ENCODE measurements at regions of chr3 and their contacts with region 1.

Region 1: GRCh38 chr3:111989061-111989678 is 9.6 kb upstream of the TAGLN3 start:
- DNase-seq: no peak
- ATAC-seq: peak; percentile 74
- H3K4me3 Mint-ChIP-seq: no peak overlapping the region
- H3K27ac Mint-ChIP-seq: no peak overlapping the region
- H3K4me1 Mint-ChIP-seq: peaks cover 12% of the 10 kb centered on the region
- H3K27me3 Mint-ChIP-seq: no peaks in the 10 kb centered on the region
- CTCF ChIP-seq: peak; percentile 37

Region 2: GRCh38 chr3:110343945-110344344 is 1645.2 kb before region 1 on chr3:
- CTCF ChIA-PET with region 1: no interaction called
- POLR2A ChIA-PET with region 1: no interaction called
- intact Hi-C with region 1: no loop called
- DNase-seq: no peak
- ATAC-seq: no peak
- H3K4me3 Mint-ChIP-seq: no peak overlapping the region
- H3K27ac Mint-ChIP-seq: no peak overlapping the region
- H3K4me1 Mint-ChIP-seq: no peaks in the 10 kb centered on the region
- H3K27me3 Mint-ChIP-seq: no peaks in the 10 kb centered on the region
- CTCF ChIP-seq: no peak

Region 3: DNA sequence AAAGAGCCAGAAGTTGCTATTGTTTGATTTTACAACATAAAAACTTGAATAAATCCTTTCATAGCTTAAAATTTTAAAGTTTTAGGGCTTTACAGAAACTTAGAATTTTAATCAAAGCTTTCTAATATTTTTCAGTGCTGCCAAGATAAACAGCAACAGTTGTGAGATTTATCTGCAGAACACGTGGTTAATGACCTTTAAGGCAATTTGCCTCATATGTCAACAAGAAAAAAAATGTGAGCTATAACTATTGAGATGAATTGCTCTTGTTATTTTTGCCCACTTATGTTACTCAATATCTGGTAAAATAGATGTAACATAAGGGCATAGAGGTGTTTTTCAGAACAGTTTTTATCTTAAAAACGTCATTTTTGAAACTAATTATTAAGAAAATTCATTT is 1014.3 kb before region 1 on chr3:
- CTCF ChIA-PET with region 1: no interaction called
- POLR2A ChIA-PET with region 1: no interaction called
- intact Hi-C with region 1: no loop called
- DNase-seq: no peak
- ATAC-seq: no peak
- H3K4me3 Mint-ChIP-seq: no peak overlapping the region
- H3K27ac Mint-ChIP-seq: no peak overlapping the region
- H3K4me1 Mint-ChIP-seq: no peaks in the 10 kb centered on the region
- H3K27me3 Mint-ChIP-seq: no peaks in the 10 kb centered on the region
- CTCF ChIP-seq: no peak

Region 4: DNA sequence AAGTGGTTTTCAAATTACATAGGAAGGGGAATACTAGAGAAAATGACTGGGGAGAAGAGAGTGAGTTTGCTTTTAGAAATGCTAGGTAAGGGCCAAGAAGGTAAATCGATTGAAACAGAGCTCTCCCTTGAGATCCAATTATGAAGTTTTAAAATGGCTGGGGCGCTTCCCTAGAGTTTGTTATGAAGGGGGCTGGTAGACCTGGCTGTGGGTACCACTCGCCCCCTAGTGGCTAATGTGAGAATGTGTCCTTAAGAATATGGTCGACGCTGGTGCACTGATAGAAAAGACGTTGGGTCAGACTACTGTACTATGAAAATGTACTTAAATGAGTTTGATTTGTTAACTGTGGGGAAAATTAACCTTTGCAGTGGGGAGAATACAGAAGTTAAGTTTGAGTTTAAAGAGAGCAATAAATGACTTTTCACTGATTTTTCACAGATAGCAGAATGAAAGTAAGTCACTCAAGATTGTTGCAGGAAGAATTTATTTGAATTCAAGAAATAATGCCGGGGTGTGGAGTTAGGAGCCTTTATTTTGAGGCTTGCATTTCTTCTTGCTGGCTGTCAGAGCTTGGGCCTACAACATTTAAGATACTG is 54.5 kb after region 1 on chr3:
- CTCF ChIA-PET with region 1: interaction called, 15 read pairs
- POLR2A ChIA-PET with region 1: no interaction called
- intact Hi-C with region 1: loop called (anchors 1 kb)
- DNase-seq: no peak
- ATAC-seq: peak; percentile 92
- H3K4me3 Mint-ChIP-seq: no peak overlapping the region
- H3K27ac Mint-ChIP-seq: no peak overlapping the region
- H3K4me1 Mint-ChIP-seq: peaks cover 6% of the 10 kb centered on the region
- H3K27me3 Mint-ChIP-seq: no peaks in the 10 kb centered on the region
- CTCF ChIP-seq: peak; percentile 95